Sciatic nerve (tissue), 2 donors: ENCODE measurements at regions of chr6 and their contacts with region 1.

Region 1: DNA sequence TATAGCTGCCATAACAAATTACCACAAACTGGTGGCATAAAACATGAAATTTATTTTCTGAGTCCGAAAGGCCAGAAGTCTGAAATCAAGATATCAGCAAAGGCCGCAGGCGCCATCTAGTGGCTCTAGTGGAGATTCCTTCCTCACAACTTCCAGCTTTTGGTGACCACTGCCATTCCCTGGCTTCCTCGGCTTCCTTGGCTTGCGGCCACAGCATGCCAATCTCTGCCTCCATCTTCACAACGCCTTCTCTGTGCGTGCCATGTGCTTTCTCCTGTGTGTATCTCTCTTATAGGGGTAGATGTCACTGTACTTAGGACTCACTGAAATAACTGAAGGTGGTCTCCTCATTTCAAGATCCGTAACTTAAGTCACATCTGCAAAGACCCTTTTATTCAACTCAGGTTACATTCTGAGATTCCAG is 5.4 kb upstream of the PLAGL1 start:
- DNase-seq: peak; percentile 88
- ATAC-seq: peak; percentile 76

Region 2: DNA sequence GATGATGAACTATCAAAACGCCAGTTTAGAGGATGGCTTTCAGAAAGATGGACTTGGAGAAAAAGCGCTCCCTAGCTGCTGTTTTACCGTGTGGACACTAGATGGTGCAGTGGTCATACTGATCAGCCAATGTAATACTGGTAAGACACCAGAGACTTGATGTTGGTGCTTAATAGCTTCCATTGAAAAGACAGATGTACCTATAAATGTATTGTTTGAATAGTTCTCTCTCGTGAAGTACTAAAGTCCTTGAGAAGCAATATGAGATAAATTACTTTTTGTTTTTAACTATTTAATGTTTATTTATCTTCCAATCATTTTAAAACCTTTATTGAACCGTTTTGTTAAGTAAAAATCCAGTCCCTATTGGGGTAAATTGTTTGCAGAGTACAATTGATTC is 438.1 kb before region 1 on chr6:
- intact Hi-C with region 1: loop called (anchors 5 kb)
- DNase-seq: no peak
- ATAC-seq: peak; percentile 94